ENCODE measurements at regions of chr5 and their contacts with region 1.

Region 1: DNA sequence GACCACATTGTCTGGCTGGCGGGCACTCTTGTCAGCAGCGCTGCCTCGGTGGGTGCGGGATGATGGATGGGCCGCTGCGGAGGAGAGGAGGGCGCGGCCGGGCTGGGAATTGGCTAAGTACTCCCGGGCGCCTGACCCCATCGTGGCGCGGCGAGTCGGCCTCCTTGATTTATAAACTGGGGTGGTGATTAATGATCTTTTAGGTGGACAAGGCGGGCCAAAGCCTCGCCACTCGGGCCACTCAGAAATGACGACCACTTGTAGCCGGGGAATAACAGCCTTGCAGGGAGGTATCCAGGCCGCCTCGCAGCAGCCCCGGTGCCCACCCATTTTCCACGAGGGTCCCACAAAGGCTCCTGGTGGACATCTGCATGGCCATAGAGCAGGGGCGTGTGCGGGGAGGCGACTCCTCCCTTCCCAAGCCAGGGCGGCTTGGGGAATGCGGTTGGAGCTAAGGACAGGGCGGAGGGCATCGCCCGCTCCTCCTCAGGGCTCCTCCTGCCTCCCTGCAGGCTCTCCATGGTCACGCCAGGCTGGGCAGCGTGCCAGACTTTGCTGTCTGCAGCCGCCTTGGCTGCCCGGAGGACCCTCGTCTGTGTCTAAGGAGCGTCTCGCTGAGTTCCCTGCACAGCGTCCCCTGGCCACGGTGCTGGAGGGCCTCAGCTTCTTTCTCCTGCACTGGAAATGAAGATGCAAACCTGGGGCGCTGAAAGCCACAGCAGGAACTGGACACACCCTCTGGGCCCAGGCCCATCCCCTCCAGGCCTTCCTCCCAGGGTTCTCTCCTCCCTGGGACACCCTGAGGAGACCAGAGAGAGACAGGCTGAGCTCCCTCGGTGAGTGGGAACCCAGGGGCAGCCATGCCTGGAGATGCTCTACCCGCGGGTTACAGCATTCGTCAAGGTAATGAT is 287.4 kb upstream of the IRX4 start:
- DNase-seq: no peak
- H3K4me3 ChIP-seq: no peak overlapping the region
- CTCF ChIP-seq: no peak

Region 2: DNA sequence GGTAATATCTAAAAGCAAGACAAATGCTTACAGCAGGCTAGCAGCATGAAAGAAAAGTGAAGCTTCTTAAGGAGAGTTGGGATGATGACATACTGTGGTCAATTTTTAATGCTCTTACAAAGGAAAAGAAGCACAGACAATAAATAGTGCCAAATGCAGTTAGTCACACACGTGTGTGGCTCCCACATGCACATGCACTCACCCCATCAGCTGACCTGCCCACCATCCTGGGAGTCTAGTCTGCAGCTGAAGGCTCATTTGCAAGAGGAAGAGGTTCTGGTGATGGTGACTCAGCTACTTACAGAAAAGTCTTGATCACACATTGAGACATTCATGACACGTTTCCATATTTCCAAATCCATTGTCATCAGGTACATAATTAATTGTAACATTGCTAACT is 499.8 kb before region 1 on chr5:
- in situ Hi-C with region 1: loop called (anchors 10 kb)
- DNase-seq: no peak
- H3K4me3 ChIP-seq: no peak overlapping the region
- CTCF ChIP-seq: no peak

Region 3: DNA sequence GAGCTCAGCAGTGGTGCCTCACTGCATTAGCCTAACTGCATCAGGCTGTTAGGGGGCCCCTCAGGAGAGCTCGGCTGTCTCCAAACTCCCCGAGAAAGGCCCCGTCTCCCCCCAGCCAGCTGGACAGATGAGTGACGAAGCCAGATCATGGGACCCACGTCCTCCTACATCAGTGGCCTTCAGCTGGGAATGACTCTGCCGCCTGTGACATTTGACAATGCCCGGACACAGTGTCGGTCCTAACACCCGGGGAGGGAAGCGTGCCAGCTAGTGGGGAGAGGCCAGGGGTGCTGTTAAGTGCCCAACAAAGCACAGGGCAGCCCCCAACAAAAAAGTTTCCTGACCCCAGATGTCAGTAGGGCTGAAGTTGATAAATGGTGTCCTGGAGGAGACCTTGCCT is 956.5 kb after region 1 on chr5:
- in situ Hi-C with region 1: no loop called
- DNase-seq: no peak
- H3K4me3 ChIP-seq: no peak overlapping the region
- CTCF ChIP-seq: no peak

Measured in astrocyte of the spinal cord (primary cell).